Heart left ventricle (tissue), 16 donors: ENCODE measurements at regions of chr1 and their contacts with region 1.

Region 1: GRCh38 chr1:167803358-167804207 is 81.8 kb downstream of the MPZL1 start:
- DNase-seq: peak; percentile 89 to 95 (median 93)
- ATAC-seq: peak; percentile 88 to 98 (median 96)
- H3K4me3 ChIP-seq: peak overlapping the region in 2 of 12 donors; percentile 1 to 6
- H3K27ac ChIP-seq: peak overlapping the region in 1 of 12 donors; percentile 28
- H3K4me1 ChIP-seq: peaks cover 0 to 25% (median 2%) of the 10 kb centered on the region in 12 donors
- H3K27me3 ChIP-seq: no peaks in the 10 kb centered on the region
- CTCF ChIP-seq: peak; percentile 95 to 100 (median 97)
- POLR2A ChIP-seq: no peak

Region 2: GRCh38 chr1:167599957-167600581 is 203.5 kb before region 1 on chr1:
- intact Hi-C with region 1: loop called (anchors 5 to 10 kb)
- DNase-seq: peak in 4 of 5 donors; percentile 41 to 57 (median 52)
- ATAC-seq: peak; percentile 83 to 86 (median 86)
- H3K4me3 ChIP-seq: peak overlapping the region in 1 of 12 donors; percentile 23
- H3K27ac ChIP-seq: peak overlapping the region in 6 of 12 donors; percentile 12 to 80 (median 52)
- H3K4me1 ChIP-seq: peaks cover 15 to 41% (median 31%) of the 10 kb centered on the region in 12 donors
- H3K27me3 ChIP-seq: no peaks in the 10 kb centered on the region
- CTCF ChIP-seq: peak; percentile 44 to 85 (median 72)
- POLR2A ChIP-seq: no peak

Region 3: DNA sequence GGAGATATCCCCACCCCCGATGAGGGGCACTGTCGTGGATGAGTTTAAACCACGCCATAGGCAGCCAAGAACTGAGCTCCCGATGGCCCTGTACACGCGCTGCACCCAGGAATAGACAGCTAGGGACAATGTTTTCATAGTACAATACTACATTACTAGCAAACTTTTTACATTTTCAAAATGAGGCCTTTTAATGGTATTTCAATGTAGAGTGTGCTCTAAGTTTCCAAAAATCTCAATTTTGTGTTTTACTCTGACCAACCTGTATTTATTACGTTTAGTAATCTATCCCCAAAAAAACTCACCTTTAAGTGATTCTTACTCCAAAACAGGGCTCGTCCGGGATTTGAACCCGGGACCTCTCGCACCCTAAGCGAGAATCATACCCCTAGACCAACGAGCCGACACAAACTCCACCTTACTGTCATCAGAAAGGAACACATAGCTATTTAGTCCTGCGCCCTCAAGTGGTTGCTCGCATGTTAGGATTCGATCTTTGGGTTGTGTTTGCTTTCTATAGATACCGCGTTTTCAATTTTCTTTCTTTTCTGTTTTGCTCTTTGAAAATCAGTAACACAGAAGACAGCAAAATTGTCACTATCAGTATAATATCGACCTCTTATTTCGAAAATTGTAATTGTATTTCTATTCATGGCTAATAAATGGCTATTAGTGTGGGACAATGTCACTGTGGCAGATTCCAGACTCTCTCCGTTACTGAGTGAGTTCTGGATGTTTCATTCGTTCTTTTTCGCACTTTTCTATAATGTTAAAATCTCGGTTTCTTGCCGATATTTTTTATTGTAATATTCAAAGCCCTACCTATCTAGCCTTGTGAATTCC is 88.2 kb before region 1 on chr1:
- intact Hi-C with region 1: loop called (anchors 2 to 5 kb)
- DNase-seq: peak; percentile 69 to 86 (median 85)
- ATAC-seq: peak; percentile 37 to 72 (median 60)
- H3K4me3 ChIP-seq: peak overlapping the region; percentile 39 to 86 (median 76)
- H3K27ac ChIP-seq: peak overlapping the region in 11 of 12 donors; percentile 84 to 94 (median 88)
- H3K4me1 ChIP-seq: peaks cover 0 to 18% (median 4%) of the 10 kb centered on the region in 12 donors
- H3K27me3 ChIP-seq: no peaks in the 10 kb centered on the region
- CTCF ChIP-seq: peak; percentile 63 to 95 (median 77)
- POLR2A ChIP-seq: no peak

Region 4: GRCh38 chr1:167721617-167722151 is 81.9 kb before region 1 on chr1 and contains the start of gene MPZL1:
- intact Hi-C with region 1: loop called (anchors 1 to 5 kb)
- DNase-seq: peak; percentile 96 to 98 (median 97)
- ATAC-seq: peak; percentile 98 to 99 (median 99)
- H3K4me3 ChIP-seq: peak within 1 kb of the TSS; percentile 88 to 100 (median 94)
- H3K27ac ChIP-seq: peak within 1 kb of the TSS; percentile 78 to 93 (median 90)
- H3K4me1 ChIP-seq: peaks cover 4 to 49% (median 32%) of the 10 kb centered on the region in 12 donors
- H3K27me3 ChIP-seq: no peaks in the 10 kb centered on the region
- CTCF ChIP-seq: no peak
- POLR2A ChIP-seq: peak in 1 of 2 donors; percentile 90
- total RNA-seq, gene MPZL1: 21.2 to 56.3 (median 29.7) TPM

Region 5: GRCh38 chr1:167893798-167894197 is 90.2 kb after region 1 on chr1:
- intact Hi-C with region 1: no loop called
- DNase-seq: no peak
- ATAC-seq: no peak
- H3K4me3 ChIP-seq: no peak overlapping the region
- H3K27ac ChIP-seq: no peak overlapping the region
- H3K4me1 ChIP-seq: peaks cover 0 to 2% (median 0%) of the 10 kb centered on the region in 12 donors
- H3K27me3 ChIP-seq: no peaks in the 10 kb centered on the region
- CTCF ChIP-seq: no peak
- POLR2A ChIP-seq: no peak

Region 6: DNA sequence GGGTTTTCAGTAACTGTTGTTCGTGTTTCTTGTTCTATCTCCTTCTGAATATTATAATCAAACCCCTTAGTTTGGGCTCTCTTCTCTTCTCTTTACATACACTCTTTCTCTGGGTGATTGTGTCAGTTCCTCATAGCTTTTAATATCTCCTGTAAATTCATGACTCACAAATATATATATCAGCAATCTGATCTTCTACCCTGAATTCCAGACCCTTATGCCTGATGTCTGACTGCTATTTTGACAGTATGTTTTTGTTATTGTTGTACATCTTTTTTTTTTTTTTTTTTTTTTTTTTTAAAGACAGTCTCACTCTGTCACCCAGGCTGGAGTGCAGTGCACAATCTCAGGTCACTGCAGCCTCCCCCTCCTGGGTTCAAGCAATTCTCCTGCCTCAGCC is 204.1 kb after region 1 on chr1:
- intact Hi-C with region 1: no loop called
- DNase-seq: no peak
- ATAC-seq: no peak
- H3K4me3 ChIP-seq: no peak overlapping the region
- H3K27ac ChIP-seq: no peak overlapping the region
- H3K4me1 ChIP-seq: peaks cover 0 to 7% (median 0%) of the 10 kb centered on the region in 12 donors
- H3K27me3 ChIP-seq: no peaks in the 10 kb centered on the region
- CTCF ChIP-seq: no peak
- POLR2A ChIP-seq: no peak